IMR-90 (cell line): ENCODE measurements at regions of chr10 and their contacts with region 1.

Region 1: DNA sequence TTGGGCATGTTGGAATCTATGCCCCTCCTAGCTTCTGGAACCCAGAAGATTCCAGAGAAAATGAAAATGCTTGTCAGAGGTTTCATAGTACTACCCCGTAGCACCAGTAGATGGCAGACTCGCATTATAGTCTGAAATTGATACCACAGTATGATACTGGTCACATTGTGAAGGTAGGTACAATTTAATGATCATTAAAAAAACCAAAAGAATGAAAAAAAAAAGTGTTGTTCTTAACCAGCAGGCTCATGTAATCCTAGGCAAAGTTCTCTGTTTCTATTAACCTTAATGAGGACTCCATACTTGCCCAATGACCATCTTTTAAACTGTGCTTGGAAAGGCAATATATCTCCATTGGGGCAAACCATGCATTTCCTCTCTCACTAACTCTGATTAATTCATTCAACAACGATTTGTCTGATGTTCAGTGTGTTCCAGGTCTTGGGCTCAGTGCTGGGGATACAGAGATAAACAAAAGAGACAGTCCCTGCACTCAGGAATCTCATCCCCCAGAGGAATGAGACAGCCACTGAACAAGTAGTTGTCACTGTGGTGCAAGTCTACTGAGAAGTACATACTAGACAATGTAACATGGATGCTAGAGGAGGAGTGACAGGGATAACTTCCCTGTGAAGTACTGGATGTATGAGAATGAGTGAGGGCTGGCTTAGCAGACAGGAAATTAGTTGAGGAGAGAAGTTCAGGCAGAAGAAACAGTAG is 223.5 kb upstream of the PHYHIPL start:
- DNase-seq: peak; percentile 42
- ATAC-seq: peak; percentile 84
- H3K4me3 ChIP-seq: no peak overlapping the region
- H3K27ac ChIP-seq: no peak overlapping the region
- H3K4me1 ChIP-seq: no peaks in the 10 kb centered on the region
- H3K27me3 ChIP-seq: peaks cover 12% of the 10 kb centered on the region
- CTCF ChIP-seq: peak; percentile 77
- POLR2A ChIP-seq: no peak
- RAD21 ChIP-seq: peak; percentile 72

Region 2: GRCh38 chr10:58781873-58782488 is 170.9 kb before region 1 on chr10:
- CTCF ChIA-PET with region 1: no interaction called
- POLR2A ChIA-PET with region 1: no interaction called
- dilution Hi-C with region 1: no loop called
- in situ Hi-C with region 1: no loop called
- intact Hi-C with region 1: loop called (anchors 5 kb)
- DNase-seq: peak; percentile 49
- ATAC-seq: peak; percentile 48; the same call in 1 of the 2 replicates
- H3K4me3 ChIP-seq: no peak overlapping the region
- H3K27ac ChIP-seq: no peak overlapping the region
- H3K4me1 ChIP-seq: peaks cover 8% of the 10 kb centered on the region
- H3K27me3 ChIP-seq: no peaks in the 10 kb centered on the region
- CTCF ChIP-seq: peak; percentile 65
- POLR2A ChIP-seq: no peak
- RAD21 ChIP-seq: peak; percentile 73

Region 3: DNA sequence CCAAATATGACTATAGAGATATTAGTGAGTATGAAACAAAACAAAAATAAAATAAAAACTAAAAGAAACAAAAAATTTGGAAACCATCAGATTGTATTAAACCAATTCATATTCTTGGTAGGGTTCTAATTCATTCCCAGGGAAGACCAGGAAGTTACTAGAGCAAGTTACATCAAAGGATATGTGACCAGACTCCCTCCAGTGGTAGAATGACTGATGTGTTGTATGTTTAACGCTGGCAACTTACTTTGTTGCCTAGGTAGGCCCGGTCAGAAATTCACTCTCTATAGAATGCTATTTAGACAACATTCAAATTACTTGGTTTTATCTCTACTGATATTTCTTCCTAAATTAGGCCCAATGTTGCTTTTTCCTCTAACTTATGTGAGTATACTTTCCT is 228.8 kb after region 1 on chr10:
- CTCF ChIA-PET with region 1: interaction called, 7 read pairs
- POLR2A ChIA-PET with region 1: no interaction called
- dilution Hi-C with region 1: no loop called
- in situ Hi-C with region 1: no loop called
- intact Hi-C with region 1: loop called (anchors 1 kb)
- DNase-seq: peak; percentile 43
- ATAC-seq: peak; percentile 51; the same call in 1 of the 2 replicates
- H3K4me3 ChIP-seq: no peak overlapping the region
- H3K27ac ChIP-seq: no peak overlapping the region
- H3K4me1 ChIP-seq: no peaks in the 10 kb centered on the region
- H3K27me3 ChIP-seq: peaks cover 6% of the 10 kb centered on the region
- CTCF ChIP-seq: peak; percentile 32
- POLR2A ChIP-seq: no peak
- RAD21 ChIP-seq: peak; percentile 44

Region 4: DNA sequence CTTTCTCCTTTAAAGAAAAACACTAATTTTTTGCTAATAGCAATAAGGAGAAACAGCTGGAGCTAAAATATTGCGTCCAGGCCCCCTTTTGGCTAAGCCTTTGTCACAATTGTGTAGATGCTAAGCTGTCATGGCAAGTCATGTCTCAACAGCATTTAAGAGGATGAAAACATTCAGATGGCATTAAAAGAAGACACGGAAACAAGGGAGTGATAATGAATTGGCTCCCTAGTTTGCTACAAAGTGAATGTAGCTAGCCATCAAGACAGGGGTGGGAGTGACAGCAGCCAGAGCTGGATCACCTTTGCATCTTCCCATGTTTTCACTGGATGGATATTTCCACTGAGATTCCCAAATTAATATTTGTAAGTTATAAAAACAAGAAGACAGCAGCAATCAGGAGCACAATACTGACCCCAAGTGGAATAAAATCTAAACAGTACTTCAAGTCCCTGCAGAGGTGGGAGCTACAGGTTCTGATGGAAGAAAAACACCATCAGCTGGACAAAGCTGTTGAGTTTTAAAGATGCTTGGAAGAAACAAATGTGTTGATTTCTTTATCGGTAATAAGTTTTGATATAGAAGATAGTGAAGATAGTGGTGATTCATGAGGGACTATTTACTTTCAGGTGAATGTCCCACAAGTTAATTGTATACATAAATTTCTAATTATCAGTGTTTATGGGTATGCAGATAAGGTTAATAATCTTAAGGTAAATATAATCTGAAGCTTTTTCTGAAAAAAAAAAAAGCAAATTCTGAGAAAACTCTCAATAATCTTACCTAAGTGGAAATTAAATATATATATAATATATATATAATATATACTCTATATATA is 627.3 kb after region 1 on chr10:
- CTCF ChIA-PET with region 1: no interaction called
- POLR2A ChIA-PET with region 1: no interaction called
- dilution Hi-C with region 1: no loop called
- in situ Hi-C with region 1: no loop called
- intact Hi-C with region 1: loop called (anchors 1 kb)
- DNase-seq: peak; percentile 58
- ATAC-seq: peak; percentile 51; the same call in 1 of the 2 replicates
- H3K4me3 ChIP-seq: no peak overlapping the region
- H3K27ac ChIP-seq: no peak overlapping the region
- H3K4me1 ChIP-seq: peaks cover 3% of the 10 kb centered on the region; the same call in 1 of the 2 replicates
- H3K27me3 ChIP-seq: peaks cover 2% of the 10 kb centered on the region; the same call in 1 of the 2 replicates
- CTCF ChIP-seq: peak; percentile 60
- POLR2A ChIP-seq: no peak
- RAD21 ChIP-seq: peak; percentile 65